Activated naive CD4-positive, alpha-beta T cell treated with anti-CD3 and anti-CD28 coated beads for 36 hours (primary cell): ENCODE measurements at regions of chr3 and their contacts with region 1.

Region 1: GRCh38 chr3:39383045-39383880 is at the start of gene SLC25A38:
- DNase-seq: peak; percentile 84
- H3K4me3 Mint-ChIP-seq: peak within 1 kb of the TSS; percentile 89
- H3K27ac Mint-ChIP-seq: peak within 1 kb of the TSS; percentile 97
- H3K4me1 Mint-ChIP-seq: peaks cover 39% of the 10 kb centered on the region
- H3K27me3 Mint-ChIP-seq: no peaks in the 10 kb centered on the region
- total RNA-seq, gene SLC25A38: 20.9 to 21.0 TPM

Region 2: GRCh38 chr3:38707730-38708129 is 675.5 kb before region 1 on chr3:
- CTCF ChIA-PET with region 1: no interaction called
- intact Hi-C with region 1: no loop called
- DNase-seq: peak; percentile 7
- H3K4me3 Mint-ChIP-seq: no peak overlapping the region
- H3K27ac Mint-ChIP-seq: no peak overlapping the region
- H3K4me1 Mint-ChIP-seq: no peaks in the 10 kb centered on the region
- H3K27me3 Mint-ChIP-seq: peaks cover 4% of the 10 kb centered on the region

Region 3: GRCh38 chr3:39107388-39108199 is 275.7 kb before region 1 on chr3 and contains the starts of genes GORASP1 and TTC21A:
- CTCF ChIA-PET with region 1: no interaction called
- intact Hi-C with region 1: loop called (anchors 1 kb)
- DNase-seq: peak; percentile 79
- H3K4me3 Mint-ChIP-seq: peak within 1 kb of the TSS; percentile 83
- H3K27ac Mint-ChIP-seq: peak within 1 kb of the TSS; percentile 57
- H3K4me1 Mint-ChIP-seq: peaks cover 42% of the 10 kb centered on the region
- H3K27me3 Mint-ChIP-seq: no peaks in the 10 kb centered on the region
- total RNA-seq, gene GORASP1: 19.0 to 21.8 TPM
- total RNA-seq, gene TTC21A: 1.5 to 1.6 TPM

Region 4: DNA sequence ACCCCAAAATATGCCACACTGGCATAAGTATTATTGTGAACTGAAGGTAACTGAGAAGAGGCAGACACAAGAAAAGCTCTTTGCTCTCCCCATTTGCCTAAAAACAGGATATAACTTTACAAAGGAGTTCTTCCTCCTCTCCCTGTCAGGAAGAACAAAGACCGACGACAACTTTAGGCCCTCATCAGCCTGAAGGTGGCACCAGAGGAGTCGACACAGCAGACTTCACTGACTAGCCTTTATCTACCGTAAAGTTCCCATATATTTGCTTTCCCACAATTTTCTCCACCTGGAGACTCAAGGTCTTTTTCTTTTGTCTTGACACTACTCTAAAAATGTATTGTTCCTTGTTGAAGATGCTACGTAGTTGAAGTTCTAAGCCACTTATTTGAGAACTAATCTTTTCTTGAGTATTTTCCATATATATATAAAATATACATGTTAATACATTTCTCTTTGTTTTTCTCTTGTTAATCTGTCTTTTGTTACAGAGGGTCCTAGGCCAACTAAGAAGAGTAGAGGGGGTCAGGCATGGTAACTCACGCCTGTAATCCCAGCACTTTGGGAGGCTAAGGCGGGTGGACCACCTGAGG is 174.7 kb before region 1 on chr3:
- CTCF ChIA-PET with region 1: interaction called, 4 read pairs
- intact Hi-C with region 1: loop called (anchors 5 kb)
- DNase-seq: peak; percentile 72
- H3K4me3 Mint-ChIP-seq: no peak overlapping the region
- H3K27ac Mint-ChIP-seq: no peak overlapping the region
- H3K4me1 Mint-ChIP-seq: peaks cover 8% of the 10 kb centered on the region
- H3K27me3 Mint-ChIP-seq: no peaks in the 10 kb centered on the region

Region 5: GRCh38 chr3:39226106-39226741 is 157.0 kb before region 1 on chr3:
- CTCF ChIA-PET with region 1: no interaction called
- intact Hi-C with region 1: no loop called
- DNase-seq: no peak
- H3K4me3 Mint-ChIP-seq: no peak overlapping the region
- H3K27ac Mint-ChIP-seq: no peak overlapping the region
- H3K4me1 Mint-ChIP-seq: no peaks in the 10 kb centered on the region
- H3K27me3 Mint-ChIP-seq: no peaks in the 10 kb centered on the region

Region 6: GRCh38 chr3:39346785-39347585 is 36.3 kb before region 1 on chr3:
- CTCF ChIA-PET with region 1: interaction called, 16 read pairs
- intact Hi-C with region 1: loop called (anchors 2 kb)
- DNase-seq: peak; percentile 20
- H3K4me3 Mint-ChIP-seq: no peak overlapping the region
- H3K27ac Mint-ChIP-seq: peak overlapping the region; percentile 37
- H3K4me1 Mint-ChIP-seq: peaks cover 43% of the 10 kb centered on the region
- H3K27me3 Mint-ChIP-seq: no peaks in the 10 kb centered on the region